GM10248 (cell line): ENCODE measurements at regions of chr4 and their contacts with region 1.

Region 1: DNA sequence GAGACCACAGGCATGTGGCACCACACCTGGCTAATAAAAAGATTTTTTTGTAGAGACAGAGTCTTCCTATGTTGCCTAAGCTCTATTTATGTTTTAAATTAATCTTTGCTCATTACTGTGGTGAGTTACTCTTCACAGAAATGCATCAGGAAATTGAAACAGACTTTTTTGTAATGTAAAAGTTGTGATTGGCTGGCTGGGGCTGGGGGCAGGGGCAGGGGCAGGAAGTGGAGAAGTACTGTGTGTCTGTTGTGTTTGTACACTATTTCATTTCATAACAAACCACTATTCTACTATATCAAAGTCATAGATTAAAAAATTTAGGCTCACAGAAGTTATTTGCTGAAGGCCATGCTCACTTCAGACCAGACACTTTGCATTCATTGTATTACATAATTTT is 19.1 kb upstream of the ABRAXAS1 start:
- DNase-seq: no peak
- CTCF ChIP-seq: no peak

Region 2: DNA sequence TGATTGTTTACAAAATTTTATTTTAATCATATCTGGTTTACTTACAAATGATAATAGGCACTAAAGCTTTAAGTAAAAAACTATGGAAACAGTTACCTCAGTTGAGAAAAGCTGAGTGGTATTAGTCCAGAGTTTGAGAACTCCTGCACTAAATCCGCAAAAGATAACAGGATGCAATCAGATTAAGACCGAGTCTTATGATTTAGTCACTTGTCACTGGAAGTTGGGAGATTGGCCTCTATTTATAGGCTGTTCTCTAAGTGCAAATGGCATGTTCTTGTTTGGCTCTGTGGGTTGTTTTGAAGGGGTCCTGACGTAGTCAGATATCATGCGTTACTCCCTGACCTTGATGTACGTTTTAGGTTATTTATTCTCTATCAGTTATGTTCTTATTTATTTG is 38.3 kb after region 1 on chr4:
- CTCF ChIA-PET with region 1: interaction called, 11 read pairs
- POLR2A ChIA-PET with region 1: no interaction called
- DNase-seq: no peak
- CTCF ChIP-seq: no peak

Region 3: GRCh38 chr4:83589279-83589678 is 85.3 kb after region 1 on chr4:
- CTCF ChIA-PET with region 1: no interaction called
- POLR2A ChIA-PET with region 1: no interaction called
- DNase-seq: no peak
- CTCF ChIP-seq: no peak